K562 (cell line): ENCODE measurements at regions of chr17 and their contacts with region 1.

Region 1: GRCh38 chr17:37791447-37792399 is 46.9 kb upstream of the HNF1B start:
- DNase-seq: peak; percentile 58 to 72 (median 67)
- ATAC-seq: peak; percentile 90
- H3K4me3 ChIP-seq: no peak overlapping the region
- H3K27ac ChIP-seq: no peak overlapping the region
- H3K4me1 ChIP-seq: no peaks in the 10 kb centered on the region
- H3K27me3 ChIP-seq: peaks cover 24 to 47% of the 10 kb centered on the region in 2 experiments; a peak in 4 of 5 replicates
- CTCF ChIP-seq: peak; percentile 63 to 82 (median 81)
- EP300 ChIP-seq: no peak
- POLR2A ChIP-seq: no peak
- RAD21 ChIP-seq: peak; percentile 46 to 77

Region 2: DNA sequence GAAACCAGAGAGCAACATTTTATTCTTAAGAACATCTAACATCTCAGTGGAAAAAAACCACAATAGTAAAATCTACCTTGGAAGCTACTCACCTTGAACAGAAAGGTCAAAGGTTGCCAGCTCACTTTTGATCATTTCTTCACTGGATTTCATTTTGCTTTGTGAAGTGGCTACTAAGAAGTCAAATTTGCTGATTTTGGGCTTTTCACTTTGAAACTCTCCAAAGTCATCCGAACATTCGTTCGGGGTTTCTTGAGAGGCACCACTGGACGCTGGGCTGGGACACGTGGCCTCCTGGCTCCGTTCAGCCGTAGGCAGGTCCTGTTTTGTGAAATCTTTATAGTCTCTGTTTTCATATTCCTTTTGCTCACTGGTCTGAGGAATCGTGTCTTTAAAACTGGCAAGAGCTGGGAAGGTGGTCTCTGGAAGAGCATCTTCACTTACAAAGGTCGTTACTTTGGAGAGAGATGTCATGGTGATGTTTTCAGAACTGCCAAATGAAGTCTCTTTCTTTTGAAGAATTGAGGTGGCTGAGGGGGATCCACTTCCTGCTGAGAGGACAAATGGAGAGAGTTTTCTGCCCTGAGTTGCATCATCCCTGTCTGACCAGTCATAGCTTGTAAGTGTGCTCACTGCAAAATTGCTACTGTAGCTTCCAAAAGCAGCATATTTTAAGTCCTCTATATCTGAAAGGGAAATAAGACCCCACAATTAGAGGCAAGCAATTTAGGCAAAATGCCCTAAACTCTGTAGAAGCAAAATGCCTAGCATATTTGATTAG is 249.7 kb before region 1 on chr17:
- CTCF ChIA-PET with region 1: no interaction called
- POLR2A ChIA-PET with region 1: no interaction called
- in situ Hi-C with region 1: no loop called
- intact Hi-C with region 1: no loop called
- DNase-seq: no peak
- ATAC-seq: no peak
- H3K4me3 ChIP-seq: no peak overlapping the region
- H3K27ac ChIP-seq: no peak overlapping the region
- H3K4me1 ChIP-seq: no peaks in the 10 kb centered on the region
- H3K27me3 ChIP-seq: no peaks in the 10 kb centered on the region
- CTCF ChIP-seq: no peak
- EP300 ChIP-seq: no peak
- POLR2A ChIP-seq: no peak
- RAD21 ChIP-seq: no peak

Region 3: GRCh38 chr17:37576281-37576680 is 215.4 kb before region 1 on chr17:
- CTCF ChIA-PET with region 1: no interaction called
- POLR2A ChIA-PET with region 1: no interaction called
- in situ Hi-C with region 1: no loop called
- intact Hi-C with region 1: no loop called
- DNase-seq: no peak
- ATAC-seq: no peak
- H3K4me3 ChIP-seq: no peak overlapping the region
- H3K27ac ChIP-seq: no peak overlapping the region
- H3K4me1 ChIP-seq: no peaks in the 10 kb centered on the region
- H3K27me3 ChIP-seq: no peaks in the 10 kb centered on the region
- CTCF ChIP-seq: no peak
- EP300 ChIP-seq: no peak
- POLR2A ChIP-seq: no peak
- RAD21 ChIP-seq: no peak

Region 4: DNA sequence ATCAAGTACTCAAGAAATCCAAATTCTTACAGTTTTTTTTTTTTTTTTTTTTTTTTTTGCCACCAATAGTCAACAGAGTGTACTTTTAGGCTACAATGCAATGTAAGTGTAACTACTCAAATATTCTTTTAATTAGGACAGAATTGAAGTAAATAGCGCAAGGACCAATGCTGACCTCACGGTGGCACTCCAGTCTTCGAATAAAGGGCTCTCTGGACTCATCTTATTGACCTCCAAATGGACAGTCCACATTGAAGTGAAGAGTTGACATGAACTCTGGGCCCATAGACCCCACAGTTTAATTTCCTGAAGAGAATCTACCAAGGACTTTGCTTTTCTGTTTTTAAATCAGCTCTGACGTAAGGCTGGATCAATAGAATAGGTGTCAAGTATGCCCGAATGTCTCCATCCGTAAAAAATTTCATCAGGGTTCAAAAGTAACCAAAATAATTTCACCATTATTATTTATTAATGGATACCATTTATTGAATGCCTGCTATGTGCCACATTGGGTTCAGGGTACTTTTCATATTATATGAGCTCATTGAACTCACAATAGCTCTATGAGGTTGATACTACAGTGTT is 141.2 kb before region 1 on chr17:
- CTCF ChIA-PET with region 1: no interaction called
- POLR2A ChIA-PET with region 1: no interaction called
- in situ Hi-C with region 1: no loop called
- intact Hi-C with region 1: loop called (anchors 1 kb)
- DNase-seq: peak in 3 of 4 experiments; percentile 22 to 55 (median 42)
- ATAC-seq: peak; percentile 85
- H3K4me3 ChIP-seq: no peak overlapping the region
- H3K27ac ChIP-seq: no peak overlapping the region
- H3K4me1 ChIP-seq: no peaks in the 10 kb centered on the region
- H3K27me3 ChIP-seq: peaks cover 0 to 9% of the 10 kb centered on the region in 2 experiments; a peak in 4 of 5 replicates
- CTCF ChIP-seq: peak; percentile 51 to 78 (median 61)
- EP300 ChIP-seq: no peak
- POLR2A ChIP-seq: no peak
- RAD21 ChIP-seq: peak; percentile 34 to 66; a peak in 2 of 4 replicates

Region 5: GRCh38 chr17:37701496-37701898 is 90.2 kb before region 1 on chr17:
- CTCF ChIA-PET with region 1: interaction called, 4 read pairs
- POLR2A ChIA-PET with region 1: no interaction called
- in situ Hi-C with region 1: no loop called
- intact Hi-C with region 1: loop called (anchors 5 kb)
- DNase-seq: peak; percentile 41 to 59 (median 56)
- ATAC-seq: peak; percentile 79
- H3K4me3 ChIP-seq: no peak overlapping the region
- H3K27ac ChIP-seq: no peak overlapping the region
- H3K4me1 ChIP-seq: no peaks in the 10 kb centered on the region
- H3K27me3 ChIP-seq: peaks cover 2 to 43% of the 10 kb centered on the region in 2 experiments
- CTCF ChIP-seq: peak; percentile 64 to 82 (median 79)
- EP300 ChIP-seq: no peak
- POLR2A ChIP-seq: no peak
- RAD21 ChIP-seq: peak; percentile 38 to 65

Region 6: DNA sequence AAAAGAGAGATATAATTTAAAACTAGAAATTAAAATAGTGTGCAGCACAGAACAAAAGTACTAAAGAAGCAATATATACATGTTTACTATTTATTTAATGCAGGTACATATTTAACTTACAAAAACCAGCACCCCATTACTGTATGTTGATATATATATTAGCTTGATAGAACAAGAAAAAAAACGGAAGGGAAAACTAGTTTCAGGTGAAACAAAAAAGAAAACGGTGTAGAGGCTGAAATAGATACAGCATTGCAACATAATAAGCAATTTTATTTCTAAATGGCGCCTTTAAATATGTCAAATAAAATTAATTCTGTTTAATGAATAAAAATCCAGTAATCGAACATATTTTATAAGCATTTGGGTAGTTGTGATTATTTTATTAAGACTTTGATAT is 50.8 kb before region 1 on chr17:
- CTCF ChIA-PET with region 1: no interaction called
- POLR2A ChIA-PET with region 1: no interaction called
- in situ Hi-C with region 1: no loop called
- intact Hi-C with region 1: no loop called
- DNase-seq: no peak
- ATAC-seq: no peak
- H3K4me3 ChIP-seq: no peak overlapping the region
- H3K27ac ChIP-seq: no peak overlapping the region
- H3K4me1 ChIP-seq: peaks cover 0 to 36% of the 10 kb centered on the region in 2 experiments; a peak in 2 of 5 replicates
- H3K27me3 ChIP-seq: peaks cover 47 to 58% of the 10 kb centered on the region in 2 experiments
- CTCF ChIP-seq: no peak
- EP300 ChIP-seq: no peak
- POLR2A ChIP-seq: no peak
- RAD21 ChIP-seq: no peak

Region 7: GRCh38 chr17:37844158-37844976 is 52.6 kb after region 1 on chr17:
- CTCF ChIA-PET with region 1: no interaction called
- POLR2A ChIA-PET with region 1: no interaction called
- in situ Hi-C with region 1: no loop called
- intact Hi-C with region 1: loop called (anchors 10 kb)
- DNase-seq: peak; percentile 67 to 84 (median 78)
- ATAC-seq: peak; percentile 99
- H3K4me3 ChIP-seq: no peak overlapping the region
- H3K27ac ChIP-seq: no peak overlapping the region
- H3K4me1 ChIP-seq: peaks cover 2 to 7% of the 10 kb centered on the region in 2 experiments; a peak in 2 of 5 replicates
- H3K27me3 ChIP-seq: peaks cover 25 to 33% of the 10 kb centered on the region in 2 experiments
- CTCF ChIP-seq: peak; percentile 80 to 84 (median 84)
- EP300 ChIP-seq: no peak
- POLR2A ChIP-seq: no peak
- RAD21 ChIP-seq: peak; percentile 59 to 79